IMR-90 (cell line): ENCODE measurements at regions of chr17 and their contacts with region 1.

Region 1: DNA sequence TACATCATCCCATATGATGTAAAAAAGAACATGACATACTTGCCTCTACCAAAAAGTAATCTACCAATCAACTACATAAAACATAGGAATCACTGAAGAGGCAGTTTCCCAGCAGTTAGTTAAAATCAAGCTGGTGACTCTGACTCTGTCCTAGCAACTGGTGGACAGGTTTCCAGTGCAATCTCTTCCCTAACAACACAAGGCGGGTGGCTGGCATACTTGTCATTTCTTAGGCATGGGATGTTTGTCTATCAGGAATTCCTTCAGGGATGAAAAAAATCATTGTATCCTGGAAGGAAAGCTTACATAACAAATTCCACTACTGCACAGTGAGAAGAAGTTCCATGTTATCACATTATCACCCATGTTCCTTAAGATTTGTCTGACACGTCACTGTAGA is 50.9 kb downstream of the HELZ start:
- DNase-seq: peak; percentile 81
- ATAC-seq: peak; percentile 97
- H3K4me3 ChIP-seq: no peak overlapping the region
- H3K27ac ChIP-seq: no peak overlapping the region
- H3K4me1 ChIP-seq: peaks cover 5% of the 10 kb centered on the region
- H3K27me3 ChIP-seq: no peaks in the 10 kb centered on the region
- CTCF ChIP-seq: no peak
- POLR2A ChIP-seq: no peak
- RAD21 ChIP-seq: no peak

Region 2: GRCh38 chr17:66855204-66855603 is 338.9 kb before region 1 on chr17:
- CTCF ChIA-PET with region 1: no interaction called
- POLR2A ChIA-PET with region 1: no interaction called
- dilution Hi-C with region 1: no loop called
- in situ Hi-C with region 1: no loop called
- intact Hi-C with region 1: no loop called
- DNase-seq: no peak
- ATAC-seq: no peak
- H3K4me3 ChIP-seq: no peak overlapping the region
- H3K27ac ChIP-seq: no peak overlapping the region
- H3K4me1 ChIP-seq: no peaks in the 10 kb centered on the region
- H3K27me3 ChIP-seq: peaks cover 12% of the 10 kb centered on the region
- CTCF ChIP-seq: no peak; the same call in 1 of the 2 replicates
- POLR2A ChIP-seq: no peak
- RAD21 ChIP-seq: no peak; the same call in 1 of the 2 replicates

Region 3: GRCh38 chr17:67183531-67183930 is 10.6 kb before region 1 on chr17:
- CTCF ChIA-PET with region 1: no interaction called
- POLR2A ChIA-PET with region 1: no interaction called
- dilution Hi-C with region 1: no loop called
- in situ Hi-C with region 1: no loop called
- intact Hi-C with region 1: loop called (anchors 1 kb)
- DNase-seq: no peak
- ATAC-seq: peak; percentile 49; the same call in 1 of the 2 replicates
- H3K4me3 ChIP-seq: no peak overlapping the region
- H3K27ac ChIP-seq: no peak overlapping the region
- H3K4me1 ChIP-seq: no peaks in the 10 kb centered on the region
- H3K27me3 ChIP-seq: no peaks in the 10 kb centered on the region
- CTCF ChIP-seq: no peak
- POLR2A ChIP-seq: no peak
- RAD21 ChIP-seq: no peak